MCF 10A (cell line): ENCODE measurements at regions of chr12 and their contacts with region 1.

Region 1: GRCh38 chr12:80763874-80764273 is 47.2 kb downstream of the MYF5 start:
- DNase-seq: peak; percentile 56
- H3K4me3 Mint-ChIP-seq: no peak overlapping the region
- H3K27ac Mint-ChIP-seq: no peak overlapping the region
- H3K4me1 Mint-ChIP-seq: no peaks in the 10 kb centered on the region
- H3K27me3 Mint-ChIP-seq: peaks cover 65% of the 10 kb centered on the region
- CTCF ChIP-seq: peak; percentile 52

Region 2: GRCh38 chr12:79886917-79887519 is 876.9 kb before region 1 on chr12:
- CTCF ChIA-PET with region 1: no interaction called
- POLR2A ChIA-PET with region 1: no interaction called
- intact Hi-C with region 1: loop called (anchors 5 kb)
- DNase-seq: peak; percentile 61
- H3K4me3 Mint-ChIP-seq: no peak overlapping the region
- H3K27ac Mint-ChIP-seq: no peak overlapping the region
- H3K4me1 Mint-ChIP-seq: peaks cover 23% of the 10 kb centered on the region
- H3K27me3 Mint-ChIP-seq: no peaks in the 10 kb centered on the region
- CTCF ChIP-seq: peak; percentile 39

Region 3: GRCh38 chr12:80412369-80412953 is 351.4 kb before region 1 on chr12:
- CTCF ChIA-PET with region 1: interaction called, 12 read pairs
- POLR2A ChIA-PET with region 1: no interaction called
- intact Hi-C with region 1: loop called (anchors 1 kb)
- DNase-seq: peak; percentile 66
- H3K4me3 Mint-ChIP-seq: no peak overlapping the region
- H3K27ac Mint-ChIP-seq: no peak overlapping the region
- H3K4me1 Mint-ChIP-seq: no peaks in the 10 kb centered on the region
- H3K27me3 Mint-ChIP-seq: peaks cover 67% of the 10 kb centered on the region
- CTCF ChIP-seq: peak; percentile 66

Region 4: DNA sequence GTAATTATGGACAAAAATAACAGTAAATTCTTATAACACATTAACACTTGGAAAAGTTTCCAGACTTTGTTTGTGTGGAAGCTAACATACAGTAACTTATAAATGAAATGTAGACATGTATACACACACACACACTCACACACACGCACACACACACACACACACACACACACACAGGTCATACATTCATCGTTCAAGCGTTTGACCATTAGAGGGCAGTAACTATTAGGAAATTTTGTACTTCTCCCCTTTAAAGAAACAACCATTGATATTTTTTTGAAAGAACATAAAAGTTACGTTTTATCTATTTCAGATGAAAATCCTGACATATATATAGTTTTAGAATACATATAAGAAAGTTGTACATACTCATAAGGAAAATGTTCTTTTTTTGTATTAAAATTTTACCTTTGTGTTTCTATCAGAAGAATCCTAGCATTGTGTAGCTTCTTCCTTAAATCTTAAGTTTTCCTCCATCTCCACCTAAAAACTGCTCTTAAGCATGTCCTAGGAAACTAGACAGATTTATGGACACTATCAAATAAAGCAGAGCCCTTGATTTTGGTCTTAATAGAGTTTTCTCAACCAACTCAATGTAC is 290.9 kb before region 1 on chr12:
- CTCF ChIA-PET with region 1: interaction called, 12 read pairs
- POLR2A ChIA-PET with region 1: interaction called, 3 read pairs
- intact Hi-C with region 1: loop called (anchors 1 kb)
- DNase-seq: peak; percentile 60
- H3K4me3 Mint-ChIP-seq: no peak overlapping the region
- H3K27ac Mint-ChIP-seq: no peak overlapping the region
- H3K4me1 Mint-ChIP-seq: no peaks in the 10 kb centered on the region
- H3K27me3 Mint-ChIP-seq: no peaks in the 10 kb centered on the region
- CTCF ChIP-seq: peak; percentile 39

Region 5: DNA sequence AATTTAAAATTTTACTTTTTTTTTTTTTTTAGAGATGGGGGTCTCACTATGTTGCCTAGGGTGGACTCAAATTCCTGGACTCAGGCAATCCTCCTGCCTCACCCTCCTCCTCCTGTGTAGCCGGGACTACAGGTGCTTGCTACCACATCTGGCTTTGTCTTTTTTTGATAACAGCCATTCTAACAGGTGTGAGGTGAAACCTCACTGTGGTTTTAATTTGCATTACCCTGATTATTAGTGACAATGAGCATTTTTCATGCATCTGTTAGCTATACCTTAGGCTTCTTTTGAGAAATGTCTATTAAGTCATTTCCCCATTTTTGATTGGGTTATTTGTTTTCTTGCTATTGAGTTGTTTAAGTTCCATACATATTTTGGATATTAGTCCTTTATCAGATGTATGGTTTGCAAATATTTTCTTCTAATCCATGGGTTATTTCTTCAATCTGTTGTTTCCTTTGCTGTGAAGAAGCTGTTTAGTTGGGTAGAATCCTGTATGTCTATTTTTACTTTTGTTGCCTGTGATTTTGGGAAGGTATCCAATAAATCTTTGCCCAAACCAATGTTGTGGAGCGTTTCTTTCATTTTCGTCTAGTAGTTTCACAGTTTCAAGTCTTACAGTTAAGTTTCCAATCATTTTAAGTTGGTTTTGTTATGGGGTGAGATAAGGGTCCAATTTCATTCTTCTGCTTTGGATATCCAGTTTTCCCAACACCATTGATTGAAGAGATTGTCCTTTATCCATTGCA is 39.0 kb after region 1 on chr12:
- CTCF ChIA-PET with region 1: no interaction called
- POLR2A ChIA-PET with region 1: no interaction called
- intact Hi-C with region 1: no loop called
- DNase-seq: no peak
- H3K4me3 Mint-ChIP-seq: no peak overlapping the region
- H3K27ac Mint-ChIP-seq: no peak overlapping the region
- H3K4me1 Mint-ChIP-seq: no peaks in the 10 kb centered on the region
- H3K27me3 Mint-ChIP-seq: no peaks in the 10 kb centered on the region
- CTCF ChIP-seq: no peak

Region 6: DNA sequence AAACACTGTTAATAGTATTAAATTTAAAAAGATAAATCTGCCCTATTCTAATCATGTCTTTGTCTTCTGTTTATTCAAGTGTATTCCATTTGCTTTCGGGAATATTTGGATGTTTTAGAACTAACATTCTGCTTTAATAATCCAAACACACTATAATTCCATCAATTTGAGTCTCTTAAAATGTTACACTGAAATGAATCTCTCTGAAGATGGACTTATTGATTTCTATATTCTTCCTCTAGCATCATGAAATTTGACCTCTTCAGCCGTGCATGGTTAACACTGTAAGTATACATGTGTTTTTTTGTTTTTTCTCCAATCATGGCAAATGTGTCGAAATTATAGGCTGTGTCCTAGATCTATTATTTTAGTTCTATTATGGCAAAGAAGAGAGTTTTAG is 653.2 kb after region 1 on chr12:
- CTCF ChIA-PET with region 1: no interaction called
- POLR2A ChIA-PET with region 1: no interaction called
- intact Hi-C with region 1: no loop called
- DNase-seq: no peak
- H3K4me3 Mint-ChIP-seq: no peak overlapping the region
- H3K27ac Mint-ChIP-seq: no peak overlapping the region
- H3K4me1 Mint-ChIP-seq: no peaks in the 10 kb centered on the region
- H3K27me3 Mint-ChIP-seq: peaks cover 32% of the 10 kb centered on the region
- CTCF ChIP-seq: no peak